ENCODE measurements at regions of chr1 and their contacts with region 1.

Region 1: GRCh38 chr1:150072959-150073358 is 5.4 kb downstream of the VPS45 start:
- DNase-seq: peak in 6 of 9 donors; percentile 21 to 54 (median 41)
- ATAC-seq: peak; percentile 72
- H3K4me3 ChIP-seq: no peak overlapping the region
- H3K4me3 Mint-ChIP-seq: no peak overlapping the region
- H3K27ac ChIP-seq: no peak overlapping the region
- H3K27ac Mint-ChIP-seq: peak overlapping the region in 3 of 9 donors; percentile 6 to 25 (median 7)
- H3K4me1 ChIP-seq: peaks cover 0 to 6% of the 10 kb centered on the region in 2 donors
- H3K4me1 Mint-ChIP-seq: peaks cover 19 to 34% (median 30%) of the 10 kb centered on the region in 7 donors
- H3K27me3 ChIP-seq: no peaks in the 10 kb centered on the region
- H3K27me3 Mint-ChIP-seq: no peaks in the 10 kb centered on the region

Region 2: DNA sequence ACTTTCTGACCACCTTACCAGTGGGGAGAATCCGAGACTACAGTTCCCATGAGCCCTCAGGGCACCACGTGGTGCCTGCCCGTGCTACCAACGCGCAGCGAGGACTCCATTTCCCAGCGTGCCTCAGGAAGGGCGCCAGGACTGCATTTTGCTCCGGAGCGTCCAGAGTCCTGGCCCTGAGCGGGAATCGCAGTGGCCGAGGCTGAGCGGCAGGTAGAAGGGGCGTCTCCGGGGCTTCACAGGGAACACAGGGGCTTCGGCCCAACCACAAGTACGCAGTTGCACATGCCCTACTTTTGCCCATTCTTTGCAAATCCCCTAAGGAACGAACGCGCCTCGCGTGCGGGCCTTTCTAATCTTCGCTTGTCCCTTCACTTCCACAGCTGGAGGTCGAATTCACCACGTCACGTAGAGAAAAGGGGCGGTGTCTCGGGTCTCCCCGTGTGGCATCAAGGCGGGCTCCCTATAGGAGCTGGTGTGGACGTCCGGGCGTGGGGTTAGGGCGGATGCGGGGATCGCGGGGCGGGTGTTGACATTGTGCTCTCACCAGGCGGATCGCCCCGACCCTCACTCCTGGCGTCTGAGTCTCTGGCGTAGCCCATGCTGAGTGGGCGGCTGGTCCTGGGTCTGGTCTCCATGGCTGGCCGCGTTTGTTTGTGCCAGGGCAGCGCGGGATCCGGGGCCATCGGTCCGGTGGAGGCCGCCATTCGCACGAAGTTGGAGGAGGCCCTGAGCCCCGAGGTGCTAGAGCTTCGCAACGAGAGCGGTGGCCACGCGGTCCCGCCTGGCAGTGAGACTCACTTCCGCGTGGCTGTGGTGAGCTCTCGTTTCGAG is 173.3 kb before region 1 on chr1 and contains the start of gene BOLA1:
- CTCF ChIA-PET with region 1: no interaction called
- POLR2A ChIA-PET with region 1: no interaction called
- intact Hi-C with region 1: no loop called
- DNase-seq: peak; percentile 59 to 83 (median 71)
- ATAC-seq: peak; percentile 99
- H3K4me3 ChIP-seq: peak within 1 kb of the TSS; percentile 91
- H3K4me3 Mint-ChIP-seq: peak within 1 kb of the TSS; percentile 85 to 97 (median 90)
- H3K27ac ChIP-seq: peak within 1 kb of the TSS; percentile 85
- H3K27ac Mint-ChIP-seq: peak within 1 kb of the TSS; percentile 86 to 96 (median 93)
- H3K4me1 ChIP-seq: peaks cover 0 to 6% of the 10 kb centered on the region in 2 donors
- H3K4me1 Mint-ChIP-seq: peaks cover 11 to 27% (median 20%) of the 10 kb centered on the region in 7 donors
- H3K27me3 ChIP-seq: no peaks in the 10 kb centered on the region
- H3K27me3 Mint-ChIP-seq: no peaks in the 10 kb centered on the region
- total RNA-seq, gene BOLA1: 7.8 to 28.9 (median 18.2) TPM

Region 3: GRCh38 chr1:150028322-150028721 is 44.6 kb before region 1 on chr1:
- CTCF ChIA-PET with region 1: no interaction called
- POLR2A ChIA-PET with region 1: no interaction called
- intact Hi-C with region 1: no loop called
- DNase-seq: no peak
- ATAC-seq: no peak
- H3K4me3 ChIP-seq: no peak overlapping the region
- H3K4me3 Mint-ChIP-seq: no peak overlapping the region
- H3K27ac ChIP-seq: no peak overlapping the region
- H3K27ac Mint-ChIP-seq: peak overlapping the region in 2 of 9 donors; percentile 4 to 13
- H3K4me1 ChIP-seq: no peaks in the 10 kb centered on the region
- H3K4me1 Mint-ChIP-seq: no peaks in the 10 kb centered on the region
- H3K27me3 ChIP-seq: no peaks in the 10 kb centered on the region
- H3K27me3 Mint-ChIP-seq: peaks cover 0 to 37% (median 3%) of the 10 kb centered on the region in 5 donors

Region 4: GRCh38 chr1:150049926-150050325 is 23.0 kb before region 1 on chr1:
- CTCF ChIA-PET with region 1: no interaction called
- POLR2A ChIA-PET with region 1: no interaction called
- intact Hi-C with region 1: no loop called
- DNase-seq: no peak
- ATAC-seq: no peak
- H3K4me3 ChIP-seq: no peak overlapping the region
- H3K4me3 Mint-ChIP-seq: no peak overlapping the region
- H3K27ac ChIP-seq: no peak overlapping the region
- H3K27ac Mint-ChIP-seq: no peak overlapping the region
- H3K4me1 ChIP-seq: peaks cover 0 to 6% of the 10 kb centered on the region in 2 donors
- H3K4me1 Mint-ChIP-seq: peaks cover 0 to 5% (median 2%) of the 10 kb centered on the region in 7 donors
- H3K27me3 ChIP-seq: no peaks in the 10 kb centered on the region
- H3K27me3 Mint-ChIP-seq: peaks cover 0 to 24% (median 0%) of the 10 kb centered on the region in 5 donors

Region 5: GRCh38 chr1:150121236-150121862 is 48.4 kb after region 1 on chr1:
- CTCF ChIA-PET with region 1: interaction called, 8 read pairs
- POLR2A ChIA-PET with region 1: no interaction called
- intact Hi-C with region 1: loop called in 1 of 2 experiments (anchors 1 kb)
- DNase-seq: no peak
- ATAC-seq: no peak
- H3K4me3 ChIP-seq: no peak overlapping the region
- H3K4me3 Mint-ChIP-seq: no peak overlapping the region
- H3K27ac ChIP-seq: no peak overlapping the region
- H3K27ac Mint-ChIP-seq: peak overlapping the region in 1 of 9 donors; percentile 17
- H3K4me1 ChIP-seq: peaks cover 0 to 5% of the 10 kb centered on the region in 2 donors
- H3K4me1 Mint-ChIP-seq: peaks cover 0 to 8% (median 3%) of the 10 kb centered on the region in 7 donors
- H3K27me3 ChIP-seq: no peaks in the 10 kb centered on the region
- H3K27me3 Mint-ChIP-seq: no peaks in the 10 kb centered on the region

Region 6: GRCh38 chr1:150134537-150134936 is 61.6 kb after region 1 on chr1:
- CTCF ChIA-PET with region 1: no interaction called
- POLR2A ChIA-PET with region 1: no interaction called
- intact Hi-C with region 1: no loop called
- DNase-seq: no peak
- ATAC-seq: no peak
- H3K4me3 ChIP-seq: no peak overlapping the region
- H3K4me3 Mint-ChIP-seq: no peak overlapping the region
- H3K27ac ChIP-seq: no peak overlapping the region
- H3K27ac Mint-ChIP-seq: no peak overlapping the region
- H3K4me1 ChIP-seq: no peaks in the 10 kb centered on the region
- H3K4me1 Mint-ChIP-seq: peaks cover 0 to 4% (median 0%) of the 10 kb centered on the region in 7 donors
- H3K27me3 ChIP-seq: no peaks in the 10 kb centered on the region
- H3K27me3 Mint-ChIP-seq: no peaks in the 10 kb centered on the region

Region 7: DNA sequence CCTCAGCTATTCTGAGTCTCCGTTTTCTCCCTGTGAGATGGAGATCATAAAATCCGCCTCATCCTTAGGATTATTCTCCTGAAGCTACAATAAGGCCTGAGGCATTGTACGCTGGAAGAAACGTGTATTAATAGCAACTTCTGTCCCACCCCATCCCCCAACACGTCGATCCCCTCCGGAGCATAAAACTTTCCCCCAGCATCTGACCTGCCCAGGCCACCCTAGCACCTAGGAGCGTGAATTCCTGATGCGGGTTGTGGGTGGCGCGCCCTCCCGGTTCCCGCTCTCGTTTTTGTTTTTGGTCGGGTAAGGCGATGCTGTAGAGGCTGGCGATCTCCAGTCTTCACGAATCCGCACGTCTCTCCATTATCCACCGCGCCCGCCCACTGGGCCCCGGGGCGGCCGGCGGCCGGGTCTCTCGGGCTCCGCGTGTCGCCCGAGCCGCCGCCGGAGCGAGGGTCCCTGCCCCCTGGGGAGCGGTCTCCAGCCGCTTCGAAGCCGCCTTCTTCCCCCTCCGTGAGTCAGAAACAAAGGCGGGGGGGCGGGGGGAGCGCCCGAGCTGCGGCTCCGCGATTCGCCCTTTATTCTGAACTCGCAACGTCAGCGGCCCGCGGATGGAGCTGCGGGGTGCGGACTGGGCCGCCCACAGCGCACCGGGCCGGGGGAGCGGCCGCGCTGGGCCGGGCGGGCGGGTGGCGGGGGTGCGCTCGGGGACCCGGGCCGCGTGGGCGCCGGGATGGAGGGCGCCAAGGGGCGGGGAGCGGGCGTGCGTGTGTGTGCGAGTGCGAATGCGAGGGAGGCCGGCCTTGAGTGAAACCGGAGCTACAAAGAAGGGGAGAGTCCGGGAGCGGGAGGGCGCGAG is 76.5 kb after region 1 on chr1 and contains the start of gene PLEKHO1:
- CTCF ChIA-PET with region 1: interaction called, 243 read pairs
- POLR2A ChIA-PET with region 1: interaction called, 11 read pairs
- intact Hi-C with region 1: no loop called
- DNase-seq: peak; percentile 53 to 84 (median 65)
- ATAC-seq: peak; percentile 86
- H3K4me3 ChIP-seq: peak within 1 kb of the TSS; percentile 89
- H3K4me3 Mint-ChIP-seq: peak within 1 kb of the TSS; percentile 89 to 99 (median 96)
- H3K27ac ChIP-seq: peak within 1 kb of the TSS; percentile 77
- H3K27ac Mint-ChIP-seq: peak within 1 kb of the TSS; percentile 87 to 99 (median 97)
- H3K4me1 ChIP-seq: peaks cover 21 to 38% of the 10 kb centered on the region in 2 donors
- H3K4me1 Mint-ChIP-seq: peaks cover 42 to 79% (median 74%) of the 10 kb centered on the region in 7 donors
- H3K27me3 ChIP-seq: no peaks in the 10 kb centered on the region
- H3K27me3 Mint-ChIP-seq: peaks cover 0 to 26% (median 0%) of the 10 kb centered on the region in 5 donors
- total RNA-seq, gene PLEKHO1: 64.9 to 111 (median 94.1) TPM

Region 8: DNA sequence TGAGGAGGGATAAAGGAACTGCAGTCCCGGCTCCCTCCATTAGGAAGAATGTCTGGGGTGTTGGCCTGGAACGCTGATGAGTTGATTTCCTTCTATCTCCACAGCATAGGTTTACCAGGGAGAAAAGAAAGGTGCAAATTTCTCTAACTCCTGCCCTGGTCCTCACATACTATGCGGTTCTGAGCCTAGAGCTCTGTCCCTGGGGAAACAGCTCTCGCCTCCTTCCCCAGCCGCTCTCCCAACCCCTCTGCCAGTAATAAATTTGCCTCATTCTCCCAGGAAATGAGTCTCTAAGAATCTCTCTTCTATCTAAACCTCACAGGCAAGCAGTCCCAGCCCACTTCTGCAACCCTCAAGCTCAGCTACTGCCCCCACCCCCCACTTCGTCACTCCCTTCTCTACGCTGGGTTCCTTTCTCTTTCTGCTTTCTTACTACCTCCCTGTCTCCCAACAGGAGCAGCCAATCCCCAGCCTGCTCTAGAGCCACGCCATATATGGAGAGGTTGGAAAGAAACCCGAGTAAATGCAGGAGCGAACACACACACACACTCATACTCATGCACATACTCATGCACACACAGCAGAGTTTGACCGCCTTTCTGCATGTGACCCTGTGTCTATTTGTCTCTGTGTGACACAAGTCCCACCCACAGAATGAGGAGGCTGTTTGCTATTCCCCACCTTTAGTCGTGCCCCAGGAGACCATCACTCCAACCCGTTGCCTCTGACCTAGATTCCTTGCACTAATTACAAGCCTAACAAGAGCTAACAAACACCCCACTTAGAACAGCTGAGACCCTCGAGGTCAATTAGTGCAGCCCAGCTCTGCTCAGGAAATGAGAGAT is 90.1 kb after region 1 on chr1:
- CTCF ChIA-PET with region 1: interaction called, 243 read pairs
- POLR2A ChIA-PET with region 1: interaction called, 20 read pairs
- intact Hi-C with region 1: loop called (anchors 1 kb)
- DNase-seq: no peak
- ATAC-seq: peak; percentile 76
- H3K4me3 ChIP-seq: no peak overlapping the region
- H3K4me3 Mint-ChIP-seq: peak overlapping the region; percentile 12 to 72 (median 55)
- H3K27ac ChIP-seq: no peak overlapping the region
- H3K27ac Mint-ChIP-seq: peak overlapping the region in 8 of 9 donors; percentile 14 to 85 (median 58)
- H3K4me1 ChIP-seq: peaks cover 0 to 31% of the 10 kb centered on the region in 2 donors
- H3K4me1 Mint-ChIP-seq: peaks cover 39 to 73% (median 51%) of the 10 kb centered on the region in 7 donors
- H3K27me3 ChIP-seq: no peaks in the 10 kb centered on the region
- H3K27me3 Mint-ChIP-seq: peaks cover 0 to 9% (median 0%) of the 10 kb centered on the region in 5 donors

Region 9: DNA sequence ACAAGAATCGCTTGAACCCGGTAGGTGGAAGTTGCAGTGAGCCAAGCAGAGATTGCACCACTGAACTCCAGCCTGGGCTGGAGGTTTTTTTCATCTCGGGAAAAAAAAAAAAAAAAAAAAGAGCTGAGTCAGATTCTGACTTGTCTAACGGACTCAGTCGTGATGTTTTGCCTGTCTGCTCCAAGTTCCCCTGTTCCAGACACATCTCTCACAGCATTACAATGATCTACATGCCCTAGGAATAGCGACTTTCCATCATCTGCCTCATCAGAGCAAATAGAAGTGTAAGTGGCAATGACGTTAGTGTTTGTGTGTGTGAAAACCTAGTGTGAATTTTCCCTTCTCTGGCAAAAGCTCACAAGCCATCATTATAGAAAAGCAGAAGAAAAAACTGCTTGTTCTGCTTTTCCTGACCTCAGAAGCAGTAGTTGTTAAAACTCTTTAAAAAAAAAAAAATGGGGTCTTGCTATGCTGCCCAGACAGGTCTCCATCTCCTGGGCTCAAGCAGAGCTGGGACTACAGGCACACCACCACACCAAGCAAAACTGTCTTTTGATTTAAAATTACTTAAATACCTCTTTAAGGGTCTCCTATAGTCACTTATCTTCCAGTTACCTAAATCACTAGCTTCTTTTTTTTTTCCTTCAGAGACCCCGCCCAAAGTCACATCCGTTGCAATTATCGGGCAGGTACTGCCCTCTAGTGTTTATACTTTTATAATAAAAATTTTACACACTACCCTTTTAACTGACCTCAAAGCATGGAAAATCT is 114.0 kb after region 1 on chr1:
- CTCF ChIA-PET with region 1: interaction called, 57 read pairs
- POLR2A ChIA-PET with region 1: interaction called, 13 read pairs
- intact Hi-C with region 1: loop called (anchors 1 kb)
- DNase-seq: peak in 7 of 9 donors; percentile 28 to 77 (median 68)
- ATAC-seq: peak; percentile 87
- H3K4me3 ChIP-seq: no peak overlapping the region
- H3K4me3 Mint-ChIP-seq: peak overlapping the region in 7 of 10 donors; percentile 6 to 74 (median 35)
- H3K27ac ChIP-seq: no peak overlapping the region
- H3K27ac Mint-ChIP-seq: peak overlapping the region in 7 of 9 donors; percentile 9 to 70 (median 33)
- H3K4me1 ChIP-seq: peaks cover 0 to 4% of the 10 kb centered on the region in 2 donors
- H3K4me1 Mint-ChIP-seq: peaks cover 7 to 13% (median 10%) of the 10 kb centered on the region in 7 donors
- H3K27me3 ChIP-seq: no peaks in the 10 kb centered on the region
- H3K27me3 Mint-ChIP-seq: no peaks in the 10 kb centered on the region

Region 10: GRCh38 chr1:150221552-150221951 is 148.6 kb after region 1 on chr1:
- CTCF ChIA-PET with region 1: no interaction called
- POLR2A ChIA-PET with region 1: no interaction called
- intact Hi-C with region 1: loop called in 1 of 2 experiments (anchors 1 kb)
- DNase-seq: peak in 5 of 9 donors; percentile 16 to 35 (median 17)
- ATAC-seq: peak; percentile 70
- H3K4me3 ChIP-seq: no peak overlapping the region
- H3K4me3 Mint-ChIP-seq: no peak overlapping the region
- H3K27ac ChIP-seq: no peak overlapping the region
- H3K27ac Mint-ChIP-seq: peak overlapping the region in 3 of 9 donors; percentile 33 to 67 (median 62)
- H3K4me1 ChIP-seq: no peaks in the 10 kb centered on the region
- H3K4me1 Mint-ChIP-seq: peaks cover 0 to 13% (median 0%) of the 10 kb centered on the region in 7 donors
- H3K27me3 ChIP-seq: no peaks in the 10 kb centered on the region
- H3K27me3 Mint-ChIP-seq: no peaks in the 10 kb centered on the region

Region 11: DNA sequence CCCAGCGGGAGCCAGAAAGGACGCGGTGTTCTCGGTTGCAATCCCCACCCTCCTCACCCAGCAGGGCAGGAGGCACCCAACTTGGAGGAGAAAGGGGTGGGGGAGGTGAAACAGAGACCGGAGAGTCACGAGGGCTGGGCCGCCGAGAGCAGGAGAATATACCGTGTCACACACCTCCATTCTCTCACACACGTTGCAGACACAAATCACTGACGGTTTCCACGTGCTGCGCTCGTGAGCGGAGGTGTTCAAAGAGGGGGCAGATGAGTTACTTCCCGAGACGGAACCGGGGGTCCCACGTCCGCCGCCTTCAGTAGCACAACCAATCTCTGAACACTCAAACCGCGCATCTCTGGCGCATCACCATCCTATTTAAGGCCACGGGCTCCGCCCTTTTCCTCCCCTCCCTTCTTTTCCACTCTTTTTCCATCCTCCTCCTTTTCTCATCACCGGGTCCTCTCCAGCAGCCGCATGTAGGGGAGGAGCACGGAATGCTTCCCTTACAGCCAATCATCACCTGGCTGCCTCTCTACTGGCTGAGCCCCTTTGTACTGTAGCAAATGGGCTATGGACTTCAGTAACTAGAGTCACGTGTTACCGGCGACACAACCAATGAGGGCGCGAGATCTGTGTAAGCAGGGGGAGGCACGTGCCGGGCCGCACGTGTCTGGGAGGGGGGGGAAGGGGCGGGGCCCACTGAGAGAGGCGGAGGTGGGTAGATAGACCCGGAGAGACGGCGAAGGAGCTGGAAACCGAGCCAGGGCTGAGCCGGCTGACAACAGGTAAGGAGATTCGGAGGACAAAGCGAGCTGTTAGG is 209.1 kb after region 1 on chr1 and contains the start of gene CIART:
- CTCF ChIA-PET with region 1: no interaction called
- POLR2A ChIA-PET with region 1: no interaction called
- intact Hi-C with region 1: loop called in 1 of 2 experiments (anchors 1 kb)
- DNase-seq: peak; percentile 34 to 88 (median 82)
- ATAC-seq: peak; percentile 95
- H3K4me3 ChIP-seq: peak within 1 kb of the TSS; percentile 58
- H3K4me3 Mint-ChIP-seq: peak within 1 kb of the TSS; percentile 84 to 98 (median 94)
- H3K27ac ChIP-seq: peak within 1 kb of the TSS; percentile 52
- H3K27ac Mint-ChIP-seq: peak within 1 kb of the TSS; percentile 80 to 98 (median 91)
- H3K4me1 ChIP-seq: peaks cover 11 to 23% of the 10 kb centered on the region in 2 donors
- H3K4me1 Mint-ChIP-seq: peaks cover 20 to 36% (median 32%) of the 10 kb centered on the region in 7 donors
- H3K27me3 ChIP-seq: no peaks in the 10 kb centered on the region
- H3K27me3 Mint-ChIP-seq: peaks cover 0 to 13% (median 0%) of the 10 kb centered on the region in 5 donors
- total RNA-seq, gene CIART: 1.4 to 2.6 (median 2.4) TPM

Measured in naive thymus-derived CD4-positive, alpha-beta T cell (primary cell).